ENCODE measurements at regions of chr18 and their contacts with region 1.

Region 1: GRCh38 chr18:40066368-40066767 is 1888.7 kb upstream of the PIK3C3 start:
- DNase-seq: no peak
- ATAC-seq: no peak
- H3K4me3 ChIP-seq: no peak overlapping the region
- H3K27ac ChIP-seq: no peak overlapping the region
- H3K4me1 ChIP-seq: no peaks in the 10 kb centered on the region
- H3K27me3 ChIP-seq: no peaks in the 10 kb centered on the region

Region 2: DNA sequence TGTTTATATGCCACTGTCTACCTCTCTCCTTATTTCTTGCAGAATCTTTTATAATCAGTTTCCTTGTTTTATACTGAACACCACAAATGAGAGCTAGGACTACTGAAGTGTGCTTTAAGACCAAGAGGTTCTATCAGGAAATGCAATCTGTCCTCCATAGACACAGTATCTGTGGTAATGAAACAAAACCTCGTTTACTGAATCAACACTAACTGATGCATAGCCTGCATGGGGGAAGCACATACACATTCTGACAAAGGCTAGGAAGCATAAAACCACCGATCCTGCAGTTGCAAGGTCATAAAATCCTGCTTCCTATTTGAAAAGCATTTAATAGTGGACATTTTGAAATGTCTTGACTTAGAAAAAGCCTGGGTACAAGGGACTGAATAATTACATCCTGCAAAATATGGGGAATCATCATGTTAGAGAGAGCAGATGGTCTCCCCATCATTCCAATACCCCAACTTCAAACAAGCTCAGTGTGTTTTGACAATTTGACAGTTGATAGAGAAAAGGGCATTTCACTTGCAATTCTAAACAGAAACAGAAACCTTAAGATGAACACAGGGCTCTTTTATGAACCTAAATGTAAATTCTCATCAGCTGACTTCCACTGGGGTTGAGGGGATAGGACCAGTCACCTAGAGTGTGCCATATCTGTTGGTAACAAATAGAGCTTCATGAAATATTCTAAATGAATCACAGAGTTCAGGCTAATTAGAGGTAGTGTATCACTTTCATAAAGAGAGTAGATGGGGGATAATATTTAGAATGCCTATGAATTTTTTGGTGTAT is 43.1 kb after region 1 on chr18:
- intact Hi-C with region 1: loop called in 1 of 2 experiments (anchors 5 kb)
- DNase-seq: no peak
- ATAC-seq: no peak
- H3K4me3 ChIP-seq: no peak overlapping the region
- H3K27ac ChIP-seq: no peak overlapping the region
- H3K4me1 ChIP-seq: no peaks in the 10 kb centered on the region
- H3K27me3 ChIP-seq: no peaks in the 10 kb centered on the region

Region 3: DNA sequence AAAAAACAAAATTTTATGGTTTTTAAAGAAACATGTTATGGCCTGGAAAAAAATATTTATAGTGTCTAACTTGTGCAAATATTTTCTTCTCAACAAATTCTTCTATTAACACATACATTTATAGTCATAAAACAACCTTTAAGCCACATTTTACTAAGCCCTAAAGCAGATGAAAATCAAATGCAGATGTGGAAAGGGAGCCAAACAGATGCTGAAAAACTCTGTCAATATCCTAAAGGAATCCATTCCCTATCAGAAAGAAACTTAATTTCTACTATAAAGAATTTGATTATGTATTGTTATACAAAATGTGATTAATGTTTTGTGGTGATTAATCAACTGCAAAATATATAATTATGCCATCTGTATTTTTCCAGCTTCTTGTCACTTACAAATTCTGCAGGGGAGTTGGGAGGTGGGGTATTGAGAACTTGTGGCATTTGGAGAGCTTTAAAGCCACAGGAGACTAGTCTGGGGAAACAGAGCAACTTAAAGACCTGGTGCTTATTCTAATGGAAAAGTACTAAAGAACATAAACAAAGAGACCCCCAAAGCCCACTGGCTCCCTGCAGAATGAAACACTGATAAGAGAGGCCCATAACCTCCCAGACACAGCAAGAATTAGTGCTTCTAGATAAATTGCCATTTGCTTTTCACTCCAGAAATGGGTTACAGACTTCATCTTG is 167.7 kb after region 1 on chr18:
- intact Hi-C with region 1: no loop called
- DNase-seq: no peak
- ATAC-seq: no peak
- H3K4me3 ChIP-seq: no peak overlapping the region
- H3K27ac ChIP-seq: no peak overlapping the region
- H3K4me1 ChIP-seq: no peaks in the 10 kb centered on the region
- H3K27me3 ChIP-seq: no peaks in the 10 kb centered on the region